ENCODE measurements at regions of chr14 and their contacts with region 1.

Region 1: DNA sequence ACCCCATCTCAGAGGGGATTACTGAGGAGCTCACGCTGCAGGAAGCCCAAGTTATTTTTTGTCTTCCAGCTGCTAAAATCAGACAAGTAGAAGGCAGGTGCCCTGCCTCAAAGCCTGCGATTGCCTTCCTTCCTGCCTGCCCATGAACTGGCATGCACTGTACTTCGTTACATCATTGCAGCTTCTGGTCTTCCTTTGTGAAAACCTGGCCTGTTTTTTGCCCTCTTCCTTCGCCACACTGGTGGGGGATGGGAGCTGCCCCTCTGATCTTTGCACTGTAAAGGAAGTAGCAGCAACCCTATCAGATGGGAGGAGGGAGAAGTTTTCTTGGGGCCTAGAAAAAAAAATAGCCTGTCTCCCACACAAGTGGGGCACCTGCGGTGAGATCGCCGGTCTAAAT is 1098.7 kb downstream of the BCL11B start:
- DNase-seq: peak; percentile 55
- H3K4me3 ChIP-seq: no peak overlapping the region
- H3K27ac ChIP-seq: peak overlapping the region in 1 of 4 donors; percentile 6
- H3K4me1 ChIP-seq: no peaks in the 10 kb centered on the region
- H3K27me3 ChIP-seq: no peaks in the 10 kb centered on the region
- CTCF ChIP-seq: no peak
- EP300 ChIP-seq: no peak
- POLR2A ChIP-seq: no peak

Region 2: DNA sequence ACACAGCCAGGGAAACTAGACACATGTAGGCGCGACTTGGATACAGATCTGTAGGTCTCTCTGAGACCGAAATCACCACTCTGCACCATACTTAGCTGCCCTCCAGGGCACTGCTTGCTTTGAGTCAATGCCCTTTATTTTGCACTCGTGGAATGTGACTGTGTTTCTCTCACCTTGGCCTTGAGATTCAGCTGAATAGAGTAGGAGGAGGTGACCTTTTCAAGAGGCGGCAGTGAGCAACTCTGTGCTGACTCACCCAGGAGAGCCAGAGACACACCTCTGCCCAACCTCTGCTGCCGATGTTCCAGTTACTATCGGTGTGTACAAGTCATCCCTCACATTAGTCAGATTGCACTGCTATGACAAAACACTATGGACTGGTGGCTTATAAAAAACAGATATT is 792.8 kb before region 1 on chr14:
- in situ Hi-C with region 1: no loop called
- intact Hi-C with region 1: no loop called
- DNase-seq: no peak
- H3K4me3 ChIP-seq: no peak overlapping the region
- H3K27ac ChIP-seq: no peak overlapping the region
- H3K4me1 ChIP-seq: no peaks in the 10 kb centered on the region
- H3K27me3 ChIP-seq: no peaks in the 10 kb centered on the region
- CTCF ChIP-seq: no peak
- EP300 ChIP-seq: no peak
- POLR2A ChIP-seq: no peak

Region 3: DNA sequence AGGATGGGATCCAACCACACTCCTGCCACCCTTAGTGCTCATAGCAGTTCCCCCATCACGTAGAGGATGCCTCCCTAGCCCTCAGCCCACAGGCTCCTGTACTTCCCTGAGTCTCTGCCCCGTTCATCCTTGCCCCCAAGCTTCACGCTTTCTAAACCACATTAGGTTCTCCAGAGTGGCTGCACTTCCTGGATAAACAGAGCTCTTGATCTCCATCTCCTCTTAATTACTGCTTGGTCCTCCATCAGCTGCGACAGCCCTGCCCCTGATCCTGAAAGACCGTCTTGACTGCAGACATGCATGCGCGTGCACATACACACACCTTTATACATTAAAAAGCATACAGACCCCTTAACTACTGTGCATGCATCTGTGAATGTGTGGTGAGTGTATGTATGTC is 568.7 kb after region 1 on chr14:
- in situ Hi-C with region 1: no loop called
- intact Hi-C with region 1: loop called (anchors 5 kb)
- DNase-seq: no peak
- H3K4me3 ChIP-seq: no peak overlapping the region
- H3K27ac ChIP-seq: no peak overlapping the region
- H3K4me1 ChIP-seq: no peaks in the 10 kb centered on the region
- H3K27me3 ChIP-seq: no peaks in the 10 kb centered on the region
- CTCF ChIP-seq: no peak
- EP300 ChIP-seq: no peak
- POLR2A ChIP-seq: no peak